BJ (cell line): ENCODE measurements at regions of chr1 and their contacts with region 1.

Region 1: GRCh38 chr1:185156854-185157598 is at the starts of genes SWT1 and TRMT1L:
- DNase-seq: peak; percentile 96
- H3K4me3 ChIP-seq: peak within 1 kb of the TSS; percentile 63
- H3K27me3 ChIP-seq: no peaks in the 10 kb centered on the region
- CTCF ChIP-seq: no peak
- polyA plus RNA-seq, gene SWT1: 0.78 and 1.7 TPM in 2 replicates
- polyA plus RNA-seq, gene TRMT1L: 13.4 and 23.4 TPM in 2 replicates

Region 2: GRCh38 chr1:185139246-185139645 is 17.8 kb before region 1 on chr1:
- CTCF ChIA-PET with region 1: no interaction called
- POLR2A ChIA-PET with region 1: no interaction called
- DNase-seq: no peak
- H3K4me3 ChIP-seq: no peak overlapping the region
- H3K27me3 ChIP-seq: no peaks in the 10 kb centered on the region
- CTCF ChIP-seq: no peak

Region 3: GRCh38 chr1:186188736-186189135 is 1031.7 kb after region 1 on chr1:
- CTCF ChIA-PET with region 1: no interaction called
- POLR2A ChIA-PET with region 1: interaction called, 16 read pairs
- DNase-seq: no peak
- H3K4me3 ChIP-seq: no peak overlapping the region
- H3K27me3 ChIP-seq: no peaks in the 10 kb centered on the region
- CTCF ChIP-seq: no peak

Region 4: DNA sequence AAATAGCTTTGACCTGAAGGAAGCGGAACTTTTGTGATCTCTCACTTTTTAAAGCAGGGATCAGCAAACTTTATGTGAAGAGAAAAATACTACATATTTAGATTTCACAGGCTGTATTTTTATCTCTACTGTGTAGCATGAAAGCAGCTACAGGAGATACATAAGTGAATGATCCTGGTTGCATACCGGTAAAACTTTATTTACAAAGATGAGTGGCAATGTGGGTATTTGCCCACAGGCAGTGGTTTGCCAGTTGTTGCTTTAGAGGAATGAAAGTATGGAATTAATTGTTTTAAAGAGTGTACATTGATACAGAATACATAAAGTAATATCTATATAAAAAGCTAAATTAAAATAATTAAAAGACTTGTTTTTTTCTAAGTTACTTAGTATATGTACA is 1236.5 kb after region 1 on chr1:
- CTCF ChIA-PET with region 1: no interaction called
- POLR2A ChIA-PET with region 1: interaction called, 18 read pairs
- DNase-seq: no peak
- H3K4me3 ChIP-seq: no peak overlapping the region
- H3K27me3 ChIP-seq: no peaks in the 10 kb centered on the region
- CTCF ChIP-seq: no peak